Naive thymus-derived CD8-positive, alpha-beta T cell (primary cell): ENCODE measurements at regions of chr5 and their contacts with region 1.

Region 1: DNA sequence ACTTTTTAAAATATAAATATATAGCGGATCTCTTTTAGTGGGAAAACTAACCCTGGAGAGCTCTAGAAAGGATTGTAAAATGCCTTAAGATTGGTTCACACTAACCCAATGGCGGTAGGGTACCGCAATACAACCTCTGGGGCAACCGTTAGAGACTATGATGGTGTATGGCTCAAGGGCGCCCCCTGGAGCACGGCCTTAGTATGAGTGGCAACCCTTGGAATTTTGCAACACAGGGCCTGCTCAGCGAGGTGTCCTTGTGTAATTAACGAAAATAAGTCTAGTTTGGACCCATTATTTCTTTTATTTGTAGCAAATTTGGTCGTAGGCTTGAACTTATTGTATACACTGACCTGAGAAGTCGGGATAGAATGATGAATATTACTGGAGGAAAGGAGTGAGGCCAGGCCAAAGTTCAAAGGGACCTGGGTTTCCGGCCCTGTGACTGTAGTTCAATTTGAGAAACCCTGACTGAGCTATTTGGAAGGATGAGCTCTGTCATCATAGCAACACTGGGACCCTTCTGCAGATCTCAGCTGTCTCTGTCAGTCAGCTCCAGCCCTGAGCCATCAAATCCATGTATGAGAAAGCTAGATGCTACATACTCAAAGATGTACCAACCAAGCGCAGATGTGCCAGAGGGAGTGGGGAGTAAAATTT is 54.8 kb downstream of the CAMK4 start:
- DNase-seq: peak; percentile 74 to 89 (median 84)
- ATAC-seq: peak; percentile 97 to 98
- H3K4me3 Mint-ChIP-seq: peak overlapping the region in 9 of 10 donors; percentile 22 to 79 (median 69)
- H3K27ac Mint-ChIP-seq: peak overlapping the region; percentile 51 to 96 (median 76)
- H3K4me1 Mint-ChIP-seq: peaks cover 24 to 82% (median 74%) of the 10 kb centered on the region in 4 donors
- H3K27me3 Mint-ChIP-seq: no peaks in the 10 kb centered on the region

Region 2: GRCh38 chr5:111223889-111224563 is 54.9 kb before region 1 on chr5 and contains the start of gene CAMK4:
- POLR2A ChIA-PET with region 1: interaction called, 18 read pairs
- DNase-seq: peak; percentile 72 to 89 (median 86)
- ATAC-seq: peak; percentile 85 to 89
- H3K4me3 Mint-ChIP-seq: peak within 1 kb of the TSS; percentile 95 to 99 (median 96)
- H3K27ac Mint-ChIP-seq: peak within 1 kb of the TSS; percentile 92 to 98 (median 96)
- H3K4me1 Mint-ChIP-seq: peaks cover 19 to 44% (median 28%) of the 10 kb centered on the region in 4 donors
- H3K27me3 Mint-ChIP-seq: peaks cover 0 to 2% (median 0%) of the 10 kb centered on the region in 5 donors
- polyA plus RNA-seq, gene CAMK4: 93.3 to 134 (median 128) TPM

Region 3: GRCh38 chr5:111229871-111230810 is 48.8 kb before region 1 on chr5:
- POLR2A ChIA-PET with region 1: interaction called, 18 read pairs
- DNase-seq: peak in 3 of 10 donors; percentile 72 to 83 (median 82)
- ATAC-seq: peak; percentile 36 to 66
- H3K4me3 Mint-ChIP-seq: peak overlapping the region; percentile 68 to 96 (median 90)
- H3K27ac Mint-ChIP-seq: peak overlapping the region; percentile 87 to 100 (median 98)
- H3K4me1 Mint-ChIP-seq: peaks cover 45 to 94% (median 68%) of the 10 kb centered on the region in 4 donors
- H3K27me3 Mint-ChIP-seq: peaks cover 0 to 2% (median 0%) of the 10 kb centered on the region in 5 donors